PC-3 (cell line): ENCODE measurements at regions of chr18 and their contacts with region 1.

Region 1: GRCh38 chr18:58043491-58044379 is at the start of gene NEDD4L:
- DNase-seq: peak; percentile 83
- ATAC-seq: peak; percentile 58
- H3K4me3 ChIP-seq: peak within 1 kb of the TSS; percentile 95
- H3K27ac ChIP-seq: peak within 1 kb of the TSS; percentile 71
- H3K4me1 ChIP-seq: peaks cover 17% of the 10 kb centered on the region
- H3K27me3 ChIP-seq: no peaks in the 10 kb centered on the region
- CTCF ChIP-seq: peak; percentile 81
- total RNA-seq, gene NEDD4L: 100 and 105 TPM in 2 replicates

Region 2: GRCh38 chr18:57803103-57803969 is 240.4 kb before region 1 on chr18 and contains the start of gene ATP8B1:
- CTCF ChIA-PET with region 1: no interaction called
- POLR2A ChIA-PET with region 1: no interaction called
- intact Hi-C with region 1: loop called (anchors 2 kb)
- DNase-seq: peak; percentile 96
- ATAC-seq: peak; percentile 75
- H3K4me3 ChIP-seq: peak within 1 kb of the TSS; percentile 79
- H3K27ac ChIP-seq: peak within 1 kb of the TSS; percentile 72
- H3K4me1 ChIP-seq: peaks cover 47% of the 10 kb centered on the region
- H3K27me3 ChIP-seq: no peaks in the 10 kb centered on the region
- CTCF ChIP-seq: no peak
- total RNA-seq, gene ATP8B1: 18.4 and 24.8 TPM in 2 replicates

Region 3: DNA sequence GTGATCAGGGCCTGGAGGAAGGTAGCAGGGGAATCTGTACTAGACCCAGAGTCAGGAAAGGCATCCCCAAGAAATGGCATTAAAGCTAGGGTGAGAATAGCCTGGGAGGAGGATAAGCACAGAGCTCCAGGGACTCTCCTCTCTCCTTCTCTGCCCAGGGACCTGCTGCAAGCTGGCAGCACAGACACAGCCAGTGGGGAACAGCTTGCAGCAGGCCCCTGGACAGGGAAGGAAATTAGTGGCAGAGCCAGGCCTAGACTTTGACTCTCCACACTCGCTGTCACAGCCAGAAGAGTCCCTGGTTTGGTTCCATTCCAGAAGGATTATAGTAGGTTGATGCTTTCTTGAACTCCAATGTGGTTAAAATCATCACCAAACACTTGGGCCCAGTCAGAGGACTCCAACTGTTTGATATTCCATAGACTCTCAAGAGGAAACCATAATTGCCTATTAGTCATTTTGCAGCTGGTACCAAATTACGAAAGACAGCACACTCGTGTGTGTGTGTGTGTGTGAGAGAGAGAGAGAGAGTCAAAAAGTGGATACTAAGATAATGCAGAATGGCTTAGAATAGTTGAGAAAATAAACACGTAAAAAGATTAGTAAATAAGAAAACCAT is 145.1 kb before region 1 on chr18:
- CTCF ChIA-PET with region 1: no interaction called
- POLR2A ChIA-PET with region 1: no interaction called
- intact Hi-C with region 1: no loop called
- DNase-seq: peak; percentile 33
- ATAC-seq: no peak; the same call in 1 of the 2 replicates
- H3K4me3 ChIP-seq: no peak overlapping the region
- H3K27ac ChIP-seq: no peak overlapping the region
- H3K4me1 ChIP-seq: no peaks in the 10 kb centered on the region
- H3K27me3 ChIP-seq: no peaks in the 10 kb centered on the region
- CTCF ChIP-seq: no peak

Region 4: DNA sequence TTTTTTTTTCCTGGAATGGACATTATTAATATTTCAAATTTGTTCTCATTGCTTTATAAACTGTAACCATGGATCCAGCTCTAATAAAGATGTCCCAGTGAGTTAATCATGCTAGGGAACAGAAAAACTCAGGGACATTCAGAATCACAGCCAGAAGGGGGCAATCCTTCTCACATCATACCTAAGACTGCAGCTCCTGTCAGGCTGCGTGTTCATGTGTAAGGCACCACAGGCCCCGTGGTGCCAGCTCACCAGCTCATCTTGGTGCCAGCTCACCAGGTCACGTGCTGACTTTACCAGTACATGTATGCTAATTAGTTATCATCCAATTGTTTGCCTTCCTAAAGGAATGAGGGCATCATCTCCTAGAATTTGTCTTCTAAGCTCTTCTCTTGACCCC is 84.5 kb before region 1 on chr18:
- CTCF ChIA-PET with region 1: interaction called, 15 read pairs
- POLR2A ChIA-PET with region 1: interaction called, 8 read pairs
- intact Hi-C with region 1: loop called (anchors 1 kb)
- DNase-seq: peak; percentile 83
- ATAC-seq: peak; percentile 92
- H3K4me3 ChIP-seq: no peak overlapping the region
- H3K27ac ChIP-seq: no peak overlapping the region
- H3K4me1 ChIP-seq: peaks cover 7% of the 10 kb centered on the region; the same call in 1 of the 2 replicates
- H3K27me3 ChIP-seq: no peaks in the 10 kb centered on the region
- CTCF ChIP-seq: peak; percentile 80

Region 5: DNA sequence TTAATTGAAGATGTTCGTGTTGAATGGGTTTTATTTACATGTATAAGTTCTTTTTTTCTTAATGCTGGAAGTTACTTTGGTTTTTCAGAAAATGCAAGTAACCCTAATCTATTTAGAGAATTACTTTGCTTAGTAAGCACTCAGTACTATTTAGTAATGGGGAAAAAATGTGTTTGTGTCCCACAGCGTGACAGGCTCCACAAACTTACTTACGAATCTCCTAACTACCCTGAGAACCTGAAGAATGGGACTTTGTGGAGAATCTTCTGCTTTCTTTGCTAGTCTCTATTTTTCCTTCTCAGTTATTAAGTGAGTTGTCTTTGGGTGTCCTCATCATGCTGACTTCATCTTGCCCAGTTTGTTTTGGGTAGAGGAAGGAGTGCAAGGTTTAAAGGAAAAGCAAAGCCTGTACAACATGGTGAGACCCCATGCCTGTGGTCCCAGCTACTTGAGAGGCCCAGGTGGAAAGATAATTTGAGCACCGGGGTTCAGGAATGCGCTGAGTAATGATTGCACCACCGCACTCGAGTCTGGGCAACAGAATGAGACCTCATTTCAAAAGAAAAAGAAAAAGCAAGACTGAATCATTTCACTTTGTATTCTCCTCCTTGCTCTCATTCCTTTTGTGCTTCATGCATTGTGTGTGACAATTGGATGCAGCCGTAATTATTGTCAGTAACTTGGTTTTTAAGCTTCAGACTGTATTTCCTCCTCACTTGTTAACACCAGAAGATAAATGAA is 10.5 kb after region 1 on chr18:
- CTCF ChIA-PET with region 1: no interaction called
- POLR2A ChIA-PET with region 1: no interaction called
- intact Hi-C with region 1: no loop called
- DNase-seq: peak; percentile 10
- ATAC-seq: no peak
- H3K4me3 ChIP-seq: no peak overlapping the region
- H3K27ac ChIP-seq: no peak overlapping the region
- H3K4me1 ChIP-seq: peaks cover 21% of the 10 kb centered on the region
- H3K27me3 ChIP-seq: no peaks in the 10 kb centered on the region
- CTCF ChIP-seq: no peak

Region 6: GRCh38 chr18:58091099-58091611 is 47.4 kb after region 1 on chr18:
- CTCF ChIA-PET with region 1: interaction called, 4 read pairs
- POLR2A ChIA-PET with region 1: no interaction called
- intact Hi-C with region 1: loop called (anchors 2 kb)
- DNase-seq: peak; percentile 89
- ATAC-seq: peak; percentile 79
- H3K4me3 ChIP-seq: peak overlapping the region; percentile 6; the same call in 1 of the 2 replicates
- H3K27ac ChIP-seq: peak overlapping the region; percentile 90
- H3K4me1 ChIP-seq: peaks cover 70% of the 10 kb centered on the region
- H3K27me3 ChIP-seq: no peaks in the 10 kb centered on the region
- CTCF ChIP-seq: 0 out of 2 replicates have a peak, but pooled peaks have one; percentile 22

Region 7: DNA sequence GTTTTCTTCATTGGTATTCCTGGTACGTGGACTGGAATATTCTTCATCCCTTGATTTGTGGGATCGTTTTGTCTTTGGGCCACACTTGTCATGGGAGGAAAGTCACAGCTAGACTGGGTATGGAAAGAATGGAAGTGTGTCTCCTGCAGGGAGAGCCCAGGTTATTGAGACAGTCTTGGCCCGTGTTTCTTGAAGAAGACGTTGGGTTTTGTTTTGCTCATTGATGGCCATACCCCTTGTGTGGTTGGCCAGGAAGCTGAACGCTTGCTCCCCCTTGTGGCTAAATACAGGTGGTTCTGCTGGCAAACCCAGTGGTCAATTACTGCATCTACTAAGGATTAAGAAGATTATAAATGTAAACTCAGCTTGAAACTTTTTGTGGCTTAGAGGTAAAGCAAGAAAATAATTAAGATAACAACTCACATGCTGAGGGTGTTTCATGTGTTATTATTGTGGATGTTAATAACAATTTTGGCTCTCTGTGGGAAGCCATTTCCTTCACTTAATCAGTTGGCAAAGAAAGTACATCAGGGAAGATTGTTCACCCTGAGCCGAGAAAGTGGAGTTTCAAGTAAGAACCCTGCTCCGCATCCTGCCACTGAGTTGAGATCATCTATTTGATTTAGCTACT is 92.1 kb after region 1 on chr18:
- CTCF ChIA-PET with region 1: no interaction called
- POLR2A ChIA-PET with region 1: no interaction called
- intact Hi-C with region 1: loop called (anchors 1 kb)
- DNase-seq: peak; percentile 77
- ATAC-seq: peak; percentile 78
- H3K4me3 ChIP-seq: no peak overlapping the region
- H3K27ac ChIP-seq: no peak overlapping the region
- H3K4me1 ChIP-seq: peaks cover 21% of the 10 kb centered on the region
- H3K27me3 ChIP-seq: no peaks in the 10 kb centered on the region
- CTCF ChIP-seq: peak; percentile 91

Region 8: GRCh38 chr18:58321986-58322385 is 278.3 kb after region 1 on chr18:
- CTCF ChIA-PET with region 1: interaction called, 5 read pairs
- POLR2A ChIA-PET with region 1: no interaction called
- intact Hi-C with region 1: loop called (anchors 2 kb)
- DNase-seq: peak; percentile 95
- ATAC-seq: peak; percentile 99
- H3K4me3 ChIP-seq: no peak overlapping the region
- H3K27ac ChIP-seq: peak overlapping the region; percentile 63
- H3K4me1 ChIP-seq: peaks cover 11% of the 10 kb centered on the region
- H3K27me3 ChIP-seq: no peaks in the 10 kb centered on the region
- CTCF ChIP-seq: peak; percentile 76